ENCODE measurements at regions of chr17 and their contacts with region 1.

Region 1: DNA sequence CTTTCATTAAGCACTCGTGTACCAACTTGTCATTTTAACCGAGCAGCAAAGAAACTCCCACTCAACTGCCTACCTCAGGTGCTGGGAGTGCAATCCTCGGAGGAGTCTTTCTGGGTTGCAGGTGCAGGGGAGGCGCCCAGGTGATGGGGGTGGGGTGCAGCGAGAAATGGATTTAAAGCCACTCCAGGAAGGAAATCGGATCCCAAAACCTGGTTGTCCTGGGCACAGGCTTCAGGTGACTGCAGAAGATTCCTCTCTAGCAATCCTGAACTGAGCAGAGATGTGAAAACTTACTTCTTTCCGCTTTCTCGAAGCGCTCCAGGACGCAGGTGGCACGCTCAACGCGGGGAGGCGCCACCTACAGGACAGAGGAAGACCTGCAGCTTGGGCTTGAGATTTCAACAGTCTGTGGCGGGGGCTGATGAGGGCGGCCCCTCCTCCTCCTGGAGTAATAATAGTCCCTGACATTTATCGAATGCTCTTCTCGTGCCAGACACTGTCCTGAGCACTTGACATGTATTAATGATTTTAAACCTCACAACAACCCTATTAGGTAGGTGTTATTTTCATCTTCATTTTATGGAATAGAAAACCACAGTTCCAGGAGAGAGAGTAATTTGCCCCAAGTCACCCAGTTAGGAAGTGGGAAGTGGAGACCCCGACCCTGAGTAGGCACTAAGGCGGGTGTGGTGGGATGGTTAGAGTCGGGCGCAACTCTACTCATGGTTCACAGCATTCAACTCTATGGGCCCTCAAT is 27.2 kb upstream of the SKAP1 start:
- DNase-seq: peak; percentile 56 to 92 (median 72)
- ATAC-seq: peak; percentile 67 to 79 (median 72)
- H3K4me3 ChIP-seq: peak overlapping the region; percentile 7 to 37
- H3K4me3 Mint-ChIP-seq: peak overlapping the region; percentile 51 to 61 (median 57)
- H3K27ac ChIP-seq: no peak overlapping the region
- H3K27ac Mint-ChIP-seq: peak overlapping the region in 1 of 2 donors; percentile 28
- H3K4me1 ChIP-seq: peaks cover 40 to 51% of the 10 kb centered on the region in 2 experiments
- H3K4me1 Mint-ChIP-seq: peaks cover 50 to 56% (median 55%) of the 10 kb centered on the region in 3 donors
- H3K27me3 ChIP-seq: no peaks in the 10 kb centered on the region
- H3K27me3 Mint-ChIP-seq: no peaks in the 10 kb centered on the region

Region 2: DNA sequence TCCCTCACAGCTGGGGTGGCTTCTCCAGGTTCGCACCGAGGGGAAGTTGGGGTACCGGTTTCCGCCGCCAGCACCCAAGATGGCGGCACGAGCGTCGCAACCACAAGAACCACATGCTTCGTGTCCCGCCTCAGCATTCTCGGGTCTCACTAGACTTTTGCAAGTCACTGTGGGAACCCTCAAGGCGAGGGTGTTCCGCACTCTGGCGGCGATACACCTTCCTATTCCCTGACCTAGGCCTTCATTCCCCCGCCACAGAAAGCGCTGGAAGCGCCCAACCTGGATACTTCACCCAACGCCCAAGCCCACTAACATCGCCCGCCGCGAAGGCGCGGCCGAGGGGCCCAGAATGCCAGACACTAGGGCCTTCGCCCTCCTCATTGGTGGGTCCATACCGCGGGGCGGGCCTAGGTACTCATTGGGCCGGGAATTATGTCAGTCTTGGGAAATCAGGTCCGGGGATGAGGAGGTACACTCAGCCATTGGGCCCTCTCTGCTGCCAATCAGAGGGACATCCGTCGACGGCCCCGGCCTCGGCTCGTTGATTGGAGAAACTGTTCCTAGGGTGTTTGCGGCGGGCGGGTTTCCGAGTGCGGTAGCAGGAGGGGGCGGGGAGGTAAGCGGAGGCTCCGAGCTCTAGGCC is 409.4 kb before region 1 on chr17 and contains the start of gene NFE2L1:
- CTCF ChIA-PET with region 1: no interaction called
- POLR2A ChIA-PET with region 1: no interaction called
- DNase-seq: peak; percentile 93 to 100 (median 98)
- ATAC-seq: peak; percentile 95 to 97 (median 96)
- H3K4me3 ChIP-seq: peak within 1 kb of the TSS; percentile 86 to 88
- H3K4me3 Mint-ChIP-seq: peak within 1 kb of the TSS; percentile 76 to 97 (median 90)
- H3K27ac ChIP-seq: peak within 1 kb of the TSS; percentile 92
- H3K27ac Mint-ChIP-seq: peak within 1 kb of the TSS; percentile 99
- H3K4me1 ChIP-seq: peaks cover 17 to 56% of the 10 kb centered on the region in 2 experiments
- H3K4me1 Mint-ChIP-seq: peaks cover 56 to 62% (median 58%) of the 10 kb centered on the region in 3 donors
- H3K27me3 ChIP-seq: no peaks in the 10 kb centered on the region
- H3K27me3 Mint-ChIP-seq: no peaks in the 10 kb centered on the region
- total RNA-seq, gene NFE2L1: 30.3 to 61.6 (median 43.9) TPM

Region 3: DNA sequence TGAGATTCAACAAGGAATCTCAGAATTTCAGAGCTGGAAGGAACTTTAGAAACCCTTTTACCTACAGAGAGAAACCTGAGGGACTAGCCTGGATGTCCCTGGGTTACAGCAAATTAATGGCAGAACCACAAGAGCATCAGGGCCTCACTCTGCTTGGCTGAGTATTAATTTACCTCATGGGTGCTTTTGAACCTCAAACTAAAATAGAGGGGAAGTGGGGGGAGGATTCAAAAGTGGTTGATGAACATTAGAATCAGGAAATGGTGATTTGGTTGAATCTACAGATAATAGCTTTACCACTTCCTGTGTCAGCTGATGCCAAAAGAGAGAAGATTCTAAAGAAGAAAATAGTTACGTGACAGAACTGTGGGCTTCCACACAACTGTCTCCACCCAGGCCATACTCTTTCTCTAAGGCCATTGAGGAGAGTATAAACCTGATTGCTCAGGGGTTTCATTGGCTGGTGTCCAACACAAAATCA is 16.0 kb before region 1 on chr17:
- CTCF ChIA-PET with region 1: interaction called in 1 of 2 experiments, 14 read pairs
- POLR2A ChIA-PET with region 1: interaction called in 1 of 2 experiments, 5 read pairs
- DNase-seq: peak in 30 of 35 experiments; percentile 12 to 87 (median 38)
- ATAC-seq: peak; percentile 72 to 84 (median 79)
- H3K4me3 ChIP-seq: no peak overlapping the region
- H3K4me3 Mint-ChIP-seq: peak overlapping the region; percentile 52 to 67 (median 67)
- H3K27ac ChIP-seq: peak overlapping the region; percentile 88
- H3K27ac Mint-ChIP-seq: peak overlapping the region; percentile 98
- H3K4me1 ChIP-seq: peaks cover 81 to 100% of the 10 kb centered on the region in 2 experiments
- H3K4me1 Mint-ChIP-seq: peaks cover 91 to 95% (median 95%) of the 10 kb centered on the region in 3 donors
- H3K27me3 ChIP-seq: no peaks in the 10 kb centered on the region
- H3K27me3 Mint-ChIP-seq: no peaks in the 10 kb centered on the region

Region 4: DNA sequence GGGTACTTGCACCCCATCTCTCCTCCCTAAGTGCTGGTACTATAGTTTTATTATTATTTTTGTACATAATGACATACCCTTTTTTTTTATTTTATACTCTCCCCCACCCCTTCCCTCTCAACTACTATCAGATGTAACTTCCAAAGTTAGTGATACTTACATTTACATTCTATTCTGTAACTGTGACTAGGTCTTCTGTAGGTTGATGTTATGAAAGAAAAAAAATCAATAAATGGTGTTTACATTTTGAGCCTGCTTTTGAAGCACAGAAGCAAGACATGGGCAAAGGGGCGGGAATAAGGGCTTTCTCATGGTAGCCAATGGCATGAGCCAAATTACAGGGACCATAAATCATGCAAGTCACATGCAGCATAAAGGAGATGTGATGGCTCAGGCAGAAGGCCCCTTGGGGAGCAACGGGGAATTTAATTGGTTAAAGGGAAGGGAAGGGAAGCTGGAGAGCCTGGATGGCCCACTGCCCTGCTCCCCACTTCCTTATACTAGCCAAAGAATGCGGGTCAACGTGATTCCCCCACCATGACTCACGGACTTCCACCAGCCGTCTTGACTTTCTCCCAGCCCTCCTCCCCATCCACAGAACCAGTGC is 1966.4 kb after region 1 on chr17:
- CTCF ChIA-PET with region 1: no interaction called
- POLR2A ChIA-PET with region 1: no interaction called
- DNase-seq: no peak
- ATAC-seq: no peak
- H3K4me3 ChIP-seq: no peak overlapping the region
- H3K4me3 Mint-ChIP-seq: peak overlapping the region in 1 of 3 donors; percentile 47
- H3K27ac ChIP-seq: no peak overlapping the region
- H3K27ac Mint-ChIP-seq: no peak overlapping the region
- H3K4me1 ChIP-seq: peaks cover 19 to 44% of the 10 kb centered on the region in 2 experiments
- H3K4me1 Mint-ChIP-seq: peaks cover 34 to 53% (median 44%) of the 10 kb centered on the region in 3 donors
- H3K27me3 ChIP-seq: no peaks in the 10 kb centered on the region
- H3K27me3 Mint-ChIP-seq: no peaks in the 10 kb centered on the region

Measured in T-cell (primary cell).